Naive thymus-derived CD8-positive, alpha-beta T cell (primary cell): ENCODE measurements at regions of chr6 and their contacts with region 1.

Region 1: GRCh38 chr6:36027501-36028087 is at the start of gene MAPK14:
- DNase-seq: peak; percentile 93 to 100 (median 99)
- ATAC-seq: peak; percentile 83 to 88
- H3K4me3 Mint-ChIP-seq: peak within 1 kb of the TSS; percentile 85 to 97 (median 94)
- H3K27ac Mint-ChIP-seq: peak within 1 kb of the TSS; percentile 74 to 96 (median 94)
- H3K4me1 Mint-ChIP-seq: peaks cover 19 to 43% (median 40%) of the 10 kb centered on the region in 4 donors
- H3K27me3 Mint-ChIP-seq: peaks cover 16 to 28% (median 21%) of the 10 kb centered on the region in 5 donors
- polyA plus RNA-seq, gene MAPK14: 38.1 to 52.9 (median 39.6) TPM

Region 2: GRCh38 chr6:36052097-36052496 is 24.5 kb after region 1 on chr6:
- POLR2A ChIA-PET with region 1: interaction called, 11 read pairs
- DNase-seq: no peak
- ATAC-seq: no peak
- H3K4me3 Mint-ChIP-seq: no peak overlapping the region
- H3K27ac Mint-ChIP-seq: no peak overlapping the region
- H3K4me1 Mint-ChIP-seq: peaks cover 7 to 22% (median 15%) of the 10 kb centered on the region in 4 donors
- H3K27me3 Mint-ChIP-seq: no peaks in the 10 kb centered on the region

Region 3: GRCh38 chr6:36094753-36095496 is 67.3 kb after region 1 on chr6:
- POLR2A ChIA-PET with region 1: interaction called, 71 read pairs
- DNase-seq: peak; percentile 61 to 86 (median 78)
- ATAC-seq: peak; percentile 68 to 82
- H3K4me3 Mint-ChIP-seq: no peak overlapping the region
- H3K27ac Mint-ChIP-seq: peak overlapping the region; percentile 63 to 92 (median 78)
- H3K4me1 Mint-ChIP-seq: peaks cover 11 to 40% (median 30%) of the 10 kb centered on the region in 4 donors
- H3K27me3 Mint-ChIP-seq: no peaks in the 10 kb centered on the region

Region 4: GRCh38 chr6:36109092-36109491 is 81.5 kb after region 1 on chr6:
- POLR2A ChIA-PET with region 1: interaction called, 14 read pairs
- DNase-seq: peak in 8 of 10 donors; percentile 43 to 87 (median 67)
- ATAC-seq: peak; percentile 94 to 96
- H3K4me3 Mint-ChIP-seq: peak overlapping the region; percentile 19 to 80 (median 50)
- H3K27ac Mint-ChIP-seq: peak overlapping the region; percentile 91 to 98 (median 96)
- H3K4me1 Mint-ChIP-seq: peaks cover 21 to 73% (median 52%) of the 10 kb centered on the region in 4 donors
- H3K27me3 Mint-ChIP-seq: no peaks in the 10 kb centered on the region

Region 5: DNA sequence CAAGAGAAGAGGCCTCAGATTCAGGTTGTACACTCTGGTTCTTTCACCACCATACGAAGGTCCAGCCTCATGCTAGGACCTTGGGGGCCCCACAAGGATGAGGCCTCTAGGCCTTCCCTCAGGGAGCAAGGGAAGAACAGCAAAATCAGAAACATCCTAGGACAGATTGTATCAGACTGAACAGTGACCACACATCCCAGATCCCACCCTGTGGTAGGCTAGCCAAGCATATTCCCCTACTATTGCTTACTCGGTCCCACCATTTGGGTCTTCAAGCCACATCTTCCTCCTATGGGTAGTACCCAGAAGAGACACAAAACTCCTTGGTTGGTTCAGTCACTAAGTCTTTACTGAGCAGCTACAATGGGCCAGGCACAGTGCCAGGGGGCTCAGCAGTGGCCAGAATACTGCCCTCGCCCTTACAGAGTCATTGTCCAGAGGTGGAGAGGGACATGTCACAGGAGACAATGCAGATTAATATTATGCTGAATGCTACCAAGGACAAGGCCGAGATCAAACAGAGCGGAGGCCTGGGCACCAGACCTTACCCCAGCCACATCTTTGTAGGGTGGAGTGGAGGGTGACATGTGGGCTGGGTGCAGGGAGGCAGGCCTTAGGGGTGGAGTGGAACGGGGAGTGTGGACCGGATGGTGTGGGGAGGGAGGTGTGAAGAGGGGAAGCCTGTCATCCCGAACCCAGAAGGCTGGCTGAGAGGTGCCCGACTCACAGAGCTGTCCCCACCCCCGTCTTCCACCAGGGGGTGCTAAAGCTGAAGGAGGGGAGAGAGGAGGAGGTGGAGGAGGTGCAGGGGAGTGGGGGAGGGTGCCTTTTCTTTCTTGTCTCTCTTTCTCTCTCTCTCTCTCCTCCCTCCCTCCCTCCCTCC is 95.9 kb after region 1 on chr6:
- POLR2A ChIA-PET with region 1: interaction called, 49 read pairs
- DNase-seq: peak; percentile 72 to 94 (median 88)
- ATAC-seq: peak; percentile 69 to 79
- H3K4me3 Mint-ChIP-seq: peak overlapping the region in 9 of 10 donors; percentile 47 to 75 (median 62)
- H3K27ac Mint-ChIP-seq: peak overlapping the region; percentile 97 to 99 (median 98)
- H3K4me1 Mint-ChIP-seq: peaks cover 41 to 97% (median 91%) of the 10 kb centered on the region in 4 donors
- H3K27me3 Mint-ChIP-seq: no peaks in the 10 kb centered on the region

Region 6: DNA sequence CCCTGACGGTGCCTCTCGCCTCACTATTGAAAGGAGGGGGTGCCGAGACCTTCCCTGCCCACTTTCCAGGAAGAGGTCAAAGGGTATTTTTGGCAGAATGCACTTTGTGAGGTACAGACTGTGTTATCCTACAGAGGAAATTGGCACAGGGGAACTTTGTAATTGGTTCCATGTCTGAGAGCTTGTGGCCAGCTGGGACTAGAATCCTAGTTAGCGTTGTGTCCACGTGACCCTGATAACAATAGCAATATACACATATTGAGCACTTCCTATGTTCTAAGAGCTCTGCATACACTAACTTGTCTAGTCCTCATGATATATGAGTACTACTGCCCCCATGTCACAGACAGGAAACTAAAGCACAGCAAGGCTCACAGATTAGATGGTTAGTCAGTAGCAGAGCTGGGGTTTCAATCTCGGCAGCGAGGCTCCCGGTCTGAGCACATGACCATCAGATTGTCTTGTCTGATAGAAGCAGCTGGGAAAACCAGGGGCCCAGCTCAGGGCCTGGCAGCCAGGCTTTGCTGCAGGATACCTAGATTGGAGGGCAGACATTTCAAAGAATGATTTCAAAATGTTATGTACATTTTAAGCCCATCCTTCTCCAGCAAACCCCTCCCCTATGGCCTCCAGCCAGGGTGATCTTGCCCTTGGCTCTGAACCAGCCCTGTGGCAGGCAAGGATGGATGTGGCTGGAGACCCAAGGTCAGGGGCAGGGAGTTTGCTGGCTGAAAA is 104.1 kb after region 1 on chr6:
- POLR2A ChIA-PET with region 1: interaction called, 21 read pairs
- DNase-seq: peak in 4 of 10 donors; percentile 22 to 50 (median 48)
- ATAC-seq: peak; percentile 63 to 73
- H3K4me3 Mint-ChIP-seq: peak overlapping the region; percentile 83 to 94 (median 88)
- H3K27ac Mint-ChIP-seq: peak overlapping the region; percentile 75 to 96 (median 95)
- H3K4me1 Mint-ChIP-seq: peaks cover 23 to 67% (median 46%) of the 10 kb centered on the region in 4 donors
- H3K27me3 Mint-ChIP-seq: no peaks in the 10 kb centered on the region

Region 7: DNA sequence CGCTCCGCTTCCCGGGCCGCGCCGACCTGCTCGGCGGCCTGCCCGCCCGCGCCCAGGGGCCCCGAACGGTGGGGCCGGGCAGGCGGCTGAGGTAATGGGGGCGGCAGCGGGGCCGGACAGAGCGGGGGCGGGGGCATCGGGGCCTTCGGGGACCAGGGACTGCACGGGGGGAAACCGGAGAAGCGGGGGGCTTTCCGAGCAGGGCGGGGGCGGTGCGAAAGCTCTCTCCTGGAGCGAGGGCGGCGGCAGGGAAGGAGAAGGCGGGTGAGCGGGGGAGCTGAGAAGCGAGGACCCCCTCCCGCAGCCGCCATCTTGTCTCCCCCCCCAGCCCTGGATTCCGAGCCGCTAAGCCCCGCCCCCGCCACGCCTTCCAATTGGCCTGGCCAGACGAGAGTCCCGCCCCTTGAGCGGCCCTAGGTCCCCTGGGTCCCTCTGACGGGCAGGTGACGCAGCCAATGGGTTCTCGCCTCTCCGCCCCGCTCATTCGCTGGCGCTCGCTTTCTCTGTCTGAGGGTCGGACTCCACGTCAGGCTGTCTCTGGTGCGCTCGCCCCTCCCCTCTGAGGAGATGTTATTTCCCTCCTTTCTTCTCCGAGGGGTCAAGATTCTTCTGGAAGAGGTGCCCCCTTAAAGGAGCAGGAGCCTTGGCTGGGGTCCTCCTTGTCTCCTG is 169.4 kb after region 1 on chr6:
- POLR2A ChIA-PET with region 1: interaction called, 21 read pairs
- DNase-seq: peak; percentile 98 to 100 (median 99)
- ATAC-seq: peak; percentile 86 to 88
- H3K4me3 Mint-ChIP-seq: peak overlapping the region; percentile 87 to 96 (median 91)
- H3K27ac Mint-ChIP-seq: peak overlapping the region; percentile 89 to 97 (median 94)
- H3K4me1 Mint-ChIP-seq: peaks cover 23 to 57% (median 52%) of the 10 kb centered on the region in 4 donors
- H3K27me3 Mint-ChIP-seq: no peaks in the 10 kb centered on the region

Region 8: GRCh38 chr6:37691904-37692806 is 1664.6 kb after region 1 on chr6:
- POLR2A ChIA-PET with region 1: no interaction called
- DNase-seq: peak; percentile 55 to 83 (median 74)
- ATAC-seq: peak; percentile 70 to 73
- H3K4me3 Mint-ChIP-seq: no peak overlapping the region
- H3K27ac Mint-ChIP-seq: no peak overlapping the region
- H3K4me1 Mint-ChIP-seq: peaks cover 11 to 21% (median 15%) of the 10 kb centered on the region in 4 donors
- H3K27me3 Mint-ChIP-seq: peaks cover 19 to 51% (median 24%) of the 10 kb centered on the region in 5 donors